ENCODE measurements at regions of chr3 and their contacts with region 1.

Region 1: GRCh38 chr3:12663936-12664908 is at the start of gene RAF1:
- DNase-seq: peak; percentile 99
- H3K4me3 ChIP-seq: peak within 1 kb of the TSS; percentile 83
- H3K27ac ChIP-seq: peak within 1 kb of the TSS; percentile 83
- H3K4me1 ChIP-seq: peaks cover 30% of the 10 kb centered on the region
- CTCF ChIP-seq: no peak
- total RNA-seq, gene RAF1: 88.0 and 91.0 TPM in 2 replicates

Region 2: DNA sequence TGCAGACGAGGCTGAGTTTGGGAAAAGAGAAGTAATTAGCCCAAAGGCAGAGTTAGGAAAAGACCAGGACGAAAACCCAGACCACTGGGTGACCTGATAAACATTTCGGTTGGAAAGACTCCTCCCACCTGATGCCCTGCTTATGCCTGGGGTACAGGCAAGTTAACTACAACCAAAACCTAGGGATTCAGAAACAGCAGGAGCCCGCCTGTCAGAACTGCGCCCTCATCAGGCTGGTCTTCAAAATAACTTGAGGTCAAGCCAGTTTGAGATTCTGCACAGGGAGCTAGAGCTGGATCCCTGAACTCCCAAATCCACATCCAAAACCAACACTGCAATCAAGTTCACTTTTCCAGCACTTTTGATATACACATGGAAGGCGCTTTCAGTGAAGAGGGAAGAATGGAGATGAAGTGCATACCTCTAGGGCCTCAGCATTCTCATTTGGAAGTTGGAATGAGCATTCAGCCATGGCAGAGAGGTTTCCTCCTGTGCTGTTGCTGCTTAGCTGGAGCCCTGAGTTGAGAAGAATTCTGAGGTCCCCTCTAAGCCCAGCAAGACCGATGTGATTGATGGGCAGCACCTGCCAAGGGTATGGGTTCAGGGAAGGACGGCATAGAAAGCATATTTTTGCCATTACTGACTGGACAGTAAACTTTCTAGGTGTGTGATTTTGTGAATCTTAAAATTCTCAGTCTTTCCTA is 168.3 kb before region 1 on chr3:
- CTCF ChIA-PET with region 1: no interaction called
- POLR2A ChIA-PET with region 1: no interaction called
- intact Hi-C with region 1: loop called (anchors 5 kb)
- DNase-seq: no peak
- H3K4me3 ChIP-seq: no peak overlapping the region
- H3K27ac ChIP-seq: no peak overlapping the region
- H3K4me1 ChIP-seq: no peaks in the 10 kb centered on the region
- CTCF ChIP-seq: peak; percentile 65

Region 3: GRCh38 chr3:12556671-12557472 is 107.3 kb before region 1 on chr3 and contains the start of gene MKRN2:
- CTCF ChIA-PET with region 1: no interaction called
- POLR2A ChIA-PET with region 1: no interaction called
- intact Hi-C with region 1: loop called (anchors 1 kb)
- DNase-seq: peak; percentile 91
- H3K4me3 ChIP-seq: peak within 1 kb of the TSS; percentile 89
- H3K27ac ChIP-seq: peak within 1 kb of the TSS; percentile 62
- H3K4me1 ChIP-seq: peaks cover 47% of the 10 kb centered on the region
- CTCF ChIP-seq: no peak
- total RNA-seq, gene MKRN2: 19.4 and 25.7 TPM in 2 replicates

Region 4: GRCh38 chr3:12613250-12613649 is 51.0 kb before region 1 on chr3:
- CTCF ChIA-PET with region 1: no interaction called
- POLR2A ChIA-PET with region 1: interaction called, 4 read pairs
- intact Hi-C with region 1: loop called (anchors 5 kb)
- DNase-seq: no peak
- H3K4me3 ChIP-seq: no peak overlapping the region
- H3K27ac ChIP-seq: no peak overlapping the region
- H3K4me1 ChIP-seq: no peaks in the 10 kb centered on the region
- CTCF ChIP-seq: no peak

Region 5: GRCh38 chr3:12648384-12648959 is 15.8 kb before region 1 on chr3:
- CTCF ChIA-PET with region 1: no interaction called
- POLR2A ChIA-PET with region 1: interaction called, 22 read pairs
- intact Hi-C with region 1: no loop called
- DNase-seq: peak; percentile 58
- H3K4me3 ChIP-seq: no peak overlapping the region
- H3K27ac ChIP-seq: no peak overlapping the region
- H3K4me1 ChIP-seq: peaks cover 18% of the 10 kb centered on the region
- CTCF ChIP-seq: no peak